Panc1 (cell line): ENCODE measurements at regions of chr22 and their contacts with region 1.

Region 1: GRCh38 chr22:17830043-17830961 is 56.0 kb upstream of the BID start:
- DNase-seq: peak; percentile 60
- ATAC-seq: peak; percentile 91
- H3K4me3 ChIP-seq: no peak overlapping the region
- H3K27ac ChIP-seq: no peak overlapping the region
- H3K4me1 ChIP-seq: no peaks in the 10 kb centered on the region
- H3K27me3 ChIP-seq: no peaks in the 10 kb centered on the region
- CTCF ChIP-seq: peak; percentile 95

Region 2: DNA sequence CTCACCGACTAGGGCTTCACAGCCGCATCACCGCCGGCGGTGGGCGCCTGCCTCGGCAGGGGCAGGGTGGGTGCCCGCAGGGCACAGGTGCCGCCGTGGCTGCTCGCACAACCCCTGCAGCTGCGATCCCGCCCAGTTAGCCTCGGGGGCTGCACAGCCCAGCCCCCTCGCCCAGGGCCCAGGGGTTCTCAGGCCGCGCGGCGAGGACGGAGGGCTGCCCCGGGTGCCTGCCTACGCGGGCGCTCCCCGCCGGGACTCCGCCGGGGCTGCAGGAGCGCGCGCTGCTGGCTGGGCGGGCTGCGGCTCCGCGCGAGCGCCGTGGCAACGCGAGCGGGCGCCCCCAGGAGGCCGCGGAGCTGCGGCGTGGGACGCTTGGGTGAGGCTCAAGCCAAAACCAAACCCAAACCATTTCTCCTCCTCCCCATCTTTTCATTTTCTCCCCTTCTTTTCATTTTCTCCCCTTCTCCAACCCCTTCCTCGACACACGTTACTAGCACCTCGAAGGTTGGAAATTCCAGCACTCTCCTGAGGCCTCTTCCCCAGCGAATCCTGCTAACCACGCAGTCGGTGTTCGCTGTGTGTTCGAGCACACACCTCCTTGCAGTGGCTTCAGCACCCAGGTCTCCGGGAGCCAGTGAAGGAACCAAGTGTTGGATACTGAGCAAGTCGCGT is 194.1 kb after region 1 on chr22 and contains the start of gene MICAL3:
- CTCF ChIA-PET with region 1: no interaction called
- POLR2A ChIA-PET with region 1: no interaction called
- in situ Hi-C with region 1: no loop called
- intact Hi-C with region 1: loop called (anchors 10 kb)
- DNase-seq: no peak
- ATAC-seq: peak; percentile 93
- H3K4me3 ChIP-seq: peak within 1 kb of the TSS; percentile 65 to 81
- H3K27ac ChIP-seq: peak within 1 kb of the TSS; percentile 34; the same call in 1 of the 2 replicates
- H3K4me1 ChIP-seq: peaks cover 3% of the 10 kb centered on the region
- H3K27me3 ChIP-seq: no peaks in the 10 kb centered on the region
- CTCF ChIP-seq: peak; percentile 88
- total RNA-seq, gene MICAL3: 47.1 TPM

Region 3: GRCh38 chr22:18070556-18071306 is 240.4 kb after region 1 on chr22:
- CTCF ChIA-PET with region 1: interaction called, 20 read pairs
- POLR2A ChIA-PET with region 1: no interaction called
- in situ Hi-C with region 1: no loop called
- intact Hi-C with region 1: loop called (anchors 2 kb)
- DNase-seq: no peak
- ATAC-seq: no peak
- H3K4me3 ChIP-seq: no peak overlapping the region
- H3K27ac ChIP-seq: no peak overlapping the region
- H3K4me1 ChIP-seq: no peaks in the 10 kb centered on the region
- H3K27me3 ChIP-seq: no peaks in the 10 kb centered on the region
- CTCF ChIP-seq: peak; percentile 47; the same call in 1 of the 2 replicates

Region 4: GRCh38 chr22:18075720-18076497 is 245.6 kb after region 1 on chr22:
- CTCF ChIA-PET with region 1: interaction called, 20 read pairs
- POLR2A ChIA-PET with region 1: no interaction called
- in situ Hi-C with region 1: no loop called
- intact Hi-C with region 1: loop called (anchors 1 kb)
- DNase-seq: peak; percentile 85
- ATAC-seq: peak; percentile 57
- H3K4me3 ChIP-seq: peak overlapping the region; percentile 8 to 92; a peak in 2 of 4 replicates
- H3K27ac ChIP-seq: no peak overlapping the region
- H3K4me1 ChIP-seq: peaks cover 7% of the 10 kb centered on the region
- H3K27me3 ChIP-seq: no peaks in the 10 kb centered on the region
- CTCF ChIP-seq: peak; percentile 79